ENCODE measurements at regions of chr1 and their contacts with region 1.

Region 1: DNA sequence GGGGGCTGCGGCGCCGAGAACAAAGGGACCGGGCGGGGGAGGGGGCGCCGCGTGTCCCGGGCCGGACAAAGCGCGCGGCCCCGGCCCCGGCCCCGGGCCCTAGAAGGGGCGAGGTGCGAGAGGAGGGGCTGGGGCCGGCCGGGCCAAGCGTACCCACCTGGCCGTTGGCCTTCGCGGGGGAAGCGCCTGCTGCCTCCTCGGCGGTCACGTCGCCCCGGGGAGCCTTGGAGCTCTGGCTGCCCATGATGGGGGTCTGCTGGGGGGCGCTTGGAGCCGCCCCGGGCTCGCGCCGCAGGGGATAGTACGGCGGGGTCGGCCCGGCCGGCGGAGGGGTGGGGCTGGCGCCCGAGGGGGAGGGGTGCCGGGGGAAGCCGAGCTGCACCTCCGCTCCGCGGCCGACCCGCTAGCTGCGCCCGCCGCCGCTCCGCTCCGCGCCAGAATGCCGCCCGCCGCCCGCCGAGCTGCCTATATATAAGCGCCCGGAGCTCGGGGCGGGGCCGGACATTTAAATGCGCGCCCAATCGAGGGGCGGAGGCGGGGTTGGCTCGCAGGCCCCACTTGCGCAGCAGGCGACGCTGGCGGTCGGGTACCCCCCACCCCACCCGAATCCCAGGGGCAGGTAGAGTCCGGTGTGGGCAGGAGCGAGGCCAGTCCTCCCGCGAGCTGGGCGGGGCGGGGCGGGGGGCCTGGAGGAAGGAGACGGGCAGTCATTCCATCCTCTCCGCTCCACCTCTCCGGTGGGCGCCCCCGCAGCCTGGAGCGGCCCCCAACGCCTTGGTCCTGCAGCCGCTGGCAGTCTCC is at the start of gene MARCKSL1:
- DNase-seq: peak; percentile 95
- H3K4me3 Mint-ChIP-seq: peak within 1 kb of the TSS; percentile 92
- H3K27ac Mint-ChIP-seq: peak within 1 kb of the TSS; percentile 69
- H3K4me1 Mint-ChIP-seq: peaks cover 39% of the 10 kb centered on the region
- H3K27me3 Mint-ChIP-seq: no peaks in the 10 kb centered on the region
- total RNA-seq, gene MARCKSL1: 34.8 and 36.6 TPM in 2 replicates

Region 2: DNA sequence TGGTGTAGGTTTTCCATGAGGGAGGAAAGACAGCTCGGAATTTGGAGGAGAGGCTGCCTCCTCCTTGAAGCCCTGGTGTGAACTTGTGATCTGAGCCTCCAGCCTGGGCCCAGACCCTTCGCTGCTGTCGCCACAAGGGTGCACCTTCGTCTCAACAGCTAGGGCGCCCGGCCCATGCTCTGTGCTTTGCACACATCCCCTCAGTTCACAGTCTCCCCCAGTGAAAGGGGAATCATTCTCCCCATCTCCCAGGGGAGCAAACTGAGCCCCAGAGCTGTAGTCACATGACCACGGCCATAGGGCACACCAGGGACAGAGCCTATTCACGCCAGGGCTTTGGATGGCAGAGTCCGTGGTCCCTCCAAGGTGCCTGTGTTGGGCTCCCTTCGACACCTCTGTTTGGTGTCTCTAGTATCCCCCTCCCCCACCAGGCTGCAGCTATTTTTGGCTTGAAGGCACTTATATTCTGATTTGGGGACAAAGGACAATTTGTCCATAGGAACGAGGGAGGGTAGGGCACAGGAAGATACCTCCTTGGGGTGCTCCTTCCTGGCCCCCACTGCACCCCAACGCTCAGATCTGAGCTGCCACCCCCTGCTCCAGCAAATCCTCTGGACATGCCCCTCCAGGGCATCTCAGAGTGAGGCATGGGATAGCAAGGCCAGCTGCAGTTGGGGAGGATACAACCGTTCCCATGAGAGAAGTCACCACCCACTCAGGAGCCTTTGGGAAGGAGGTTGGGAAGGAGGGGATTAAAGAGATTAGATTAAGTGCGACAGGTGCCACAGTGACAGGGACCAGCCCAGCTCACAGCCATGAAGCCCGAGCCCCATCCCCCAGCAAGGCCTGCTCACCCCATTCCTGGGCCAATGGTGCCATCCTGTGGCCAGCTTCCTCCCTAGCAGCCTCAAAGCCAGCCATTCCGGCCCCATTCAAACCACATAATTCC is 1628.3 kb before region 1 on chr1:
- intact Hi-C with region 1: no loop called
- DNase-seq: peak; percentile 86
- H3K4me3 Mint-ChIP-seq: no peak overlapping the region
- H3K27ac Mint-ChIP-seq: no peak overlapping the region
- H3K4me1 Mint-ChIP-seq: no peaks in the 10 kb centered on the region
- H3K27me3 Mint-ChIP-seq: peaks cover 14% of the 10 kb centered on the region

Region 3: DNA sequence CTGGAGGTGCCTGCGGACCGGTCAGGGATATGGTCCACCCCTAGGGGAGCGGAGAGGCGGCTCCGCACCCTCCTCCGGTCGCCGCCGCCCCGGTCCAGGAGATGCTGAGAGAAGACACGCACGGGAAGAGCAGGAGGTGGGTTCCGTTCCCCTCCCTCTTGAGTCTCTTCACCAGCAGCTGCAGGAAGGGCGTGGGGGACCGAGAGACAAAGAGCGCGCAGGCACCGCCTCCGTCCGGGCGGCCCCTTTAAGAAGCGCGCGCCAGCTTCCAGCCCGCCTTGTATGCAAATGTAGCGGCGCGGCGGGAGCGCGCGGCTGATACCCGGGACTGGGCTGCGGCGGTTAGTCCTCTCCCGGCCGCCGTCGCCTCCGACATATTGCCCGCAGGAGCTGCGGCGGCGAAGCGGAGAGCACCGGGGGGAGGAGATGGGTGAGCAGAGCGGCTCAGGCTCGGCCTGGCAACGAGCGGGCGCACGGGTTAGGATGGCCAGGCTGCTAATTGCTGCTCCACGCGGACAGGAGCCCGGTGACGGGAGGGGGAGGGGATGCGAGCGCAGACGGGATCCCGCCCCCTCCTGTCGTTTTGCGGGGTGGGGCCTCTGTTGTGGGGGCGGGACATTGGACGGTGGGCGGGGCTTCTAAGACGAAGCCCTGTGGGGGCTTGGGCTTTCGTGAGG is 263.2 kb before region 1 on chr1 and contains the start of gene TMEM39B:
- intact Hi-C with region 1: loop called (anchors 5 kb)
- DNase-seq: peak; percentile 98
- H3K4me3 Mint-ChIP-seq: peak within 1 kb of the TSS; percentile 92
- H3K27ac Mint-ChIP-seq: peak within 1 kb of the TSS; percentile 96
- H3K4me1 Mint-ChIP-seq: peaks cover 43% of the 10 kb centered on the region
- H3K27me3 Mint-ChIP-seq: no peaks in the 10 kb centered on the region
- total RNA-seq, gene TMEM39B: 34.5 and 38.0 TPM in 2 replicates

Region 4: DNA sequence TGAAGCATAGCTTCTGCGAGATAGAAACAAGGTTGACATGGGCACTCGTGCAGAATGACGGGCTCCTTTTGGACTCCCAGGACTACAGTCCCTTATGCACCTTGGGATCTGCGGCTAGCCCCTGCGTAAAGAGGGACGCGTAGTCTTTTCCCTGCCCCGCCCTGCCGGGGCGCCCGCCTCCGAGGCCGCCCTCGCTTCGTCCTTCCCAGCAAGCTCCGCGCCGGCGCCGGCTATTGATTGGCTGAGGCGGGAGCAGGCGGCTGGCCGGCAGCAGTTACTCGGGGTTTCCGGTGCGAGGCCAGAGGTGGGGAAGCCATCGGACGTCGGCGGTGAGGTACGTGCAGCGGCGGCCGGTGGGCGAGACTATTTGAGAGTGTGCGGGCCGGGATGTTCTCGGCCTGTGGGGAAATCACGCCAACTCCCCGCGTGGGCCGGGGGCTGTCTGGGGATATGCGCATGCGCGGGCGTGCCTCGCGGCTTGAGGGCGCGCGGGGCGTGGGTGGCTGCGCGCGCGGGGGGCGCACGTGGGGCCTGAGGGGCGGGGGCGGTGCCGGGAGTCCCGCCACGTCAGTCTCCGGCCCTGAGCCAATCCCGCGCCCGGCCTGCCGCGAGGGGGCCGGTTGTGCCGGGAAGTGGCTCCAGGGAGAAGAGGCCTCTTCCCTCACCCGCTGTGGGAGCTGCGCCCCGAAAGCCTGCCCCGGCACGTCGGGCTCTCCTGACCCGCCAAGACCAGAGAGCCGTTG is 156.4 kb before region 1 on chr1 and contains the start of gene TXLNA:
- intact Hi-C with region 1: no loop called
- DNase-seq: peak; percentile 97
- H3K4me3 Mint-ChIP-seq: peak within 1 kb of the TSS; percentile 98
- H3K27ac Mint-ChIP-seq: peak within 1 kb of the TSS; percentile 99
- H3K4me1 Mint-ChIP-seq: peaks cover 39% of the 10 kb centered on the region
- H3K27me3 Mint-ChIP-seq: no peaks in the 10 kb centered on the region
- total RNA-seq, gene TXLNA: 105 and 106 TPM in 2 replicates

Region 5: DNA sequence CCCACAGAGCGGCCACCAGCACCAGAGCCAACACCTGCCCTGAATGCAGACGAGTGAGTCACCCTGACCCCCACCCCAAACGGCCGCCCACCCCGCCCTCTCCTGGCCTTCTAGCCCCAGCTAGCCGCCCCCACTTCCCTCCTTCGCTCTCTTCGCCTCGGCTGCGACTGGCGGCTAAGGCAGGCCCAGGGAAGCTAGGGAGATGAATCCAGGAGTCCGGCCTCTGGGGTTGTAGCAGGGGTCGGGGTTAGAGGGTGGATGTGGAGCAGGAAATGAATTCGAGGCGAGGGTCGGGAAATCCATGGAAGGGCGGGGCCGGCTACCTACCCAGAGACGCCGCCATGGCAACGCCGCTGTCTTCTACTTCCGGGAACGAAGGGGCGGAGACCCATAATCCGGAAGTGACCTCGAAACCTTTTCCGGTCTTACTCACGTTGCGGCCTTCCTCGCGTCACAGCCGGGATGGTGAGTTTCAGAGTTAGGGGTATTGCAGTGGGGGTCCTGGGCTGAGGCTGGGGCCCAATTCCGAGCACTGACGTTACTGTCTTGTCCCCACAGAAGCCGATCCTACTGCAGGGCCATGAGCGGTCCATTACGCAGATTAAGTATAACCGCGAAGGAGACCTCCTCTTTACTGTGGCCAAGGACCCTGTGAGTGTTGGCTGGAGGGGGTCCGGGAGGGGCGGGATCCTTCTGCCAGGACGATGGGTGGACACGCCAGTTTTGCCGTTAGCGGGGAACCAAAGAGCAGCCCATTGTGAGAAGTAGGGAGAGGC is 113.8 kb before region 1 on chr1 and contains the starts of genes EIF3I and TMEM234:
- intact Hi-C with region 1: loop called (anchors 5 kb)
- DNase-seq: peak; percentile 98
- H3K4me3 Mint-ChIP-seq: peak within 1 kb of the TSS; percentile 94
- H3K27ac Mint-ChIP-seq: peak within 1 kb of the TSS; percentile 95
- H3K4me1 Mint-ChIP-seq: peaks cover 29% of the 10 kb centered on the region
- H3K27me3 Mint-ChIP-seq: no peaks in the 10 kb centered on the region
- total RNA-seq, gene EIF3I: 304 and 341 TPM in 2 replicates
- total RNA-seq, gene TMEM234: 10.6 and 10.9 TPM in 2 replicates

Region 6: GRCh38 chr1:32291708-32292492 is 44.1 kb before region 1 on chr1 and contains the start of gene HDAC1:
- intact Hi-C with region 1: loop called (anchors 2 kb)
- DNase-seq: peak; percentile 99
- H3K4me3 Mint-ChIP-seq: peak within 1 kb of the TSS; percentile 97
- H3K27ac Mint-ChIP-seq: peak within 1 kb of the TSS; percentile 99
- H3K4me1 Mint-ChIP-seq: peaks cover 31% of the 10 kb centered on the region
- H3K27me3 Mint-ChIP-seq: no peaks in the 10 kb centered on the region
- total RNA-seq, gene HDAC1: 181 and 184 TPM in 2 replicates

Region 7: GRCh38 chr1:32351399-32352238 is 15.6 kb after region 1 on chr1:
- intact Hi-C with region 1: loop called (anchors 1 kb)
- DNase-seq: peak; percentile 98
- H3K4me3 Mint-ChIP-seq: peak overlapping the region; percentile 86
- H3K27ac Mint-ChIP-seq: peak overlapping the region; percentile 65
- H3K4me1 Mint-ChIP-seq: peaks cover 30% of the 10 kb centered on the region
- H3K27me3 Mint-ChIP-seq: peaks cover 2% of the 10 kb centered on the region

Region 8: DNA sequence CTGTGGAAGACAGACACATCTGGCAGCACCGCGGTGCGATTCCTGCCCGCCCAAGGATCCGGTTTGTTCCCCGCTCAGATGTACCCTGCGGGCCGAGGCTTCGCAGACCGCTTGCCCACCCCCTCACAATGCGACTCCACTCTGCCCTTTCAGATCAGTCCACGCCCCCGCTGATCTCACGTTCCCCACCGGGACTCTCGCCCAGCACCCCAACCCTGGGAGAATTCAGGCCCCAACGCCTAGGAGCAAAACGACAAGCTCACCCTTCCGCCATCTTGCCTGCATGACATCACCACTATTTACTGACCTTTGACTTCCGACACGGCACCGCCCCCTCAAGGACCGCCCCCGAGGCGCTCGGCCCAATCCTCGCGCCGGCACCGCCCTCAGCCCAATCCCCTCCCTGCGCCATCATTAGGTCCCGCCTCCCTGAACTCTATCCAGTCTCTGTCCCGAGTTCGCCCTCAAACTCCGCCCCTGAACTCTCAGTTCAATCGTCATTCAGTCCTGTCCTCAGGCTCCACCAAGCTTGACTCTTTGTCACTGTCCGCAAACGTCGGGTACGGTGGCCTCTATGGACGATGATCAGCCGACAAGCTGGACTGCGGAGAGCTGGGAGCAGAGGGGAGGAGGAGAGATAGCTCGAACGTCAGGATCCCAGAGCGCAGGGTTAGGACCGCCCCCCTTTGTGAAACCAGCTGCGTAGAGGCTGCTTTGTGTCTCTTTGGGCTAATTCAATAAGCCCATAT is 58.3 kb after region 1 on chr1 and contains the start of gene BSDC1:
- intact Hi-C with region 1: loop called (anchors 5 kb)
- DNase-seq: peak; percentile 100
- H3K4me3 Mint-ChIP-seq: peak within 1 kb of the TSS; percentile 94
- H3K27ac Mint-ChIP-seq: peak within 1 kb of the TSS; percentile 99
- H3K4me1 Mint-ChIP-seq: peaks cover 21% of the 10 kb centered on the region
- H3K27me3 Mint-ChIP-seq: peaks cover 4% of the 10 kb centered on the region
- total RNA-seq, gene BSDC1: 44.8 and 49.5 TPM in 2 replicates

Region 9: DNA sequence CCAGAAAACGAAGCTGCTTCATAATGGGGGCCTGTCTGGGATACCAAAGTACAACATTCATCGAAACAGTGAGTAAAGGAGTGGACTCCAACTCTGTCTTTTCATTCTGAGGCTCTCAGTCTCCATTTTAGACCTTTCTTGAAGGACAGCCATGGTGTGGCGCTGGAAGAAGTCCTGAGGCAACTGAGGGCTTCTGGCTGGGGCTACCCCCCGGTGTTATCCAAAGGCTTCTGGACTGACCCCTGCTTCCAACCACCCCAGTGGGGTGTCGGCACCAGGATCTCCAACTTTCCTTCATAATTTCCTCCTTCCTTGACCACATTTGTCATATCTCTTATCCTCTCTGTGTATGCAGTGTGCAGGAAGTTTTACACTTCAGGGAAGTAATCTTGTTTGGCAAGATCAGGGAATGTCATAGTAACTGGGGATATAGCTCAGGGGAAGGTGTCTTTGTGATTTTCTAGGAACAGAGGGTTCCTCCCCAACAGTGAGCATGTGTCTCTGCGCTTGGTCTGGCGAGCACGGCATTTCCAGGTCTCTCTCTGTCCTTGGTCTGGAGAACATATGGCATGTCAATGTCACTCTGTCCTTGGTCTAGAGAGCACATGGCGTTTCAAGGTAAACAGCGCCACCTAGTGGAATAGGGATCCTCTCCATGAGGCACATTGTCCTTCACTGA is 77.7 kb after region 1 on chr1:
- intact Hi-C with region 1: loop called (anchors 5 kb)
- DNase-seq: peak; percentile 93
- H3K4me3 Mint-ChIP-seq: no peak overlapping the region
- H3K27ac Mint-ChIP-seq: peak overlapping the region; percentile 10
- H3K4me1 Mint-ChIP-seq: peaks cover 3% of the 10 kb centered on the region
- H3K27me3 Mint-ChIP-seq: peaks cover 26% of the 10 kb centered on the region

Region 10: GRCh38 chr1:32684167-32684811 is 348.3 kb after region 1 on chr1:
- intact Hi-C with region 1: no loop called
- DNase-seq: no peak
- H3K4me3 Mint-ChIP-seq: no peak overlapping the region
- H3K27ac Mint-ChIP-seq: peak overlapping the region; percentile 45
- H3K4me1 Mint-ChIP-seq: peaks cover 2% of the 10 kb centered on the region
- H3K27me3 Mint-ChIP-seq: no peaks in the 10 kb centered on the region